ENCODE measurements at regions of chr1 and their contacts with region 1.

Region 1: DNA sequence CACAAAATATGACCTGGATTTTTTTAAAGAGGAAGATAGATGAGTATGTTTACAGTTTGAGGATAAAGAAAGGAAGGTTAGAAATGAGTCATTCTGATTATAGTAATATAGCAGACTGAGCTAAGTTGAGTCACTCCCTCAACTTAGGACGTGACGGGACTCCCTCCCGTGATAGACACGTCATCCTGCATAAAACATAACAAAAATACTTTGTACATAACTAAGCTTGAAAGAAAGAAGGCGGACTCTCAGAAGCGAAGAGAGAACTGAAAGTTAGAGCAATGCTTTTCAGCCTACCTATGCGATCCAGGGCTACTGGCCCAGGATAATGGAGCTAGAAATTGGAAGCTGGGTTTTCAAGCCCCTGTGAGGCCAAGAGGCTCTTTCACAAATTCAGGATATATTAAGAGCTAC is 53.0 kb upstream of the DESI2 start:
- DNase-seq: peak; percentile 18 to 76
- H3K4me3 ChIP-seq: peak overlapping the region in 1 of 2 donors; percentile 21
- H3K27ac ChIP-seq: peak overlapping the region in 1 of 2 donors; percentile 45
- H3K4me1 ChIP-seq: no peaks in the 10 kb centered on the region
- H3K27me3 ChIP-seq: no peaks in the 10 kb centered on the region
- CTCF ChIP-seq: no peak

Region 2: GRCh38 chr1:244672946-244673682 is 73.2 kb after region 1 on chr1:
- intact Hi-C with region 1: loop called (anchors 5 kb)
- DNase-seq: no peak
- H3K4me3 ChIP-seq: peak overlapping the region in 1 of 2 donors; percentile 53
- H3K27ac ChIP-seq: peak overlapping the region; percentile 77 to 78
- H3K4me1 ChIP-seq: peaks cover 0 to 15% of the 10 kb centered on the region in 2 donors
- H3K27me3 ChIP-seq: no peaks in the 10 kb centered on the region
- CTCF ChIP-seq: no peak

Region 3: GRCh38 chr1:244796718-244797406 is 196.9 kb after region 1 on chr1:
- intact Hi-C with region 1: loop called (anchors 1 kb)
- DNase-seq: peak in 1 of 2 donors; percentile 74
- H3K4me3 ChIP-seq: no peak overlapping the region
- H3K27ac ChIP-seq: no peak overlapping the region
- H3K4me1 ChIP-seq: no peaks in the 10 kb centered on the region
- H3K27me3 ChIP-seq: no peaks in the 10 kb centered on the region
- CTCF ChIP-seq: peak; percentile 67 to 88 (median 74)